Calu3 (cell line): ENCODE measurements at regions of chr3 and their contacts with region 1.

Region 1: DNA sequence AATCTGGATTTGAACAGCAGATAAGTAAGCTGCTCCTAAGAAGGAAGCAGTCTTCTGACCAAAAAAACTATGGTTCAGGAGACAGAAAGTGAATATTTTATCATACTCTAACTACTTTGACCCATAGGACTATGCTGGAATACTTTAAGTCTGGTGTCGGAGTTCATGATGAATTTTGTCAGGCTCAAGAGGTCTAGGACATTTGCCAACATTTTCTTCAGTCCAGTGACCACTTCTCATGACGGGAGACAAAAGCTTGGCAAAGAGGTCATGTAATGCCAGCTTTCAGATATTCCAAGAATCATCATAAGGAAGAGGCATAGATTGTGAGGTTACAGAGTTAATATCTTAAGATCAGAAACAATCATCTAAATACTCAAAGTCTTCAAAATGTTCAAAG is 20.5 kb upstream of the DCBLD2 start:
- DNase-seq: no peak
- H3K4me3 Mint-ChIP-seq: no peak overlapping the region
- H3K27ac Mint-ChIP-seq: no peak overlapping the region
- H3K4me1 Mint-ChIP-seq: peaks cover 40% of the 10 kb centered on the region
- H3K27me3 Mint-ChIP-seq: no peaks in the 10 kb centered on the region
- CTCF ChIP-seq: no peak

Region 2: GRCh38 chr3:98962189-98962930 is 40.4 kb after region 1 on chr3:
- CTCF ChIA-PET with region 1: no interaction called
- intact Hi-C with region 1: loop called (anchors 5 kb)
- DNase-seq: peak; percentile 48
- H3K4me3 Mint-ChIP-seq: no peak overlapping the region
- H3K27ac Mint-ChIP-seq: no peak overlapping the region
- H3K4me1 Mint-ChIP-seq: peaks cover 13% of the 10 kb centered on the region
- H3K27me3 Mint-ChIP-seq: no peaks in the 10 kb centered on the region
- CTCF ChIP-seq: no peak